Activated T-helper 1 cell treated with anti-CD3 and anti-CD28 coated beads, Interleukin-12 subunit alpha, Interleukin-12 subunit beta, Interleukin-2, Interleukin-4 antibody, amounts not matched to agents 30 ng/mL and 10 ng/mL and 1 ng/mL, durations not matched to agents 14 hours and 24 hours and 36 hours (primary cell): ENCODE measurements at regions of chr5 and their contacts with region 1.

Region 1: DNA sequence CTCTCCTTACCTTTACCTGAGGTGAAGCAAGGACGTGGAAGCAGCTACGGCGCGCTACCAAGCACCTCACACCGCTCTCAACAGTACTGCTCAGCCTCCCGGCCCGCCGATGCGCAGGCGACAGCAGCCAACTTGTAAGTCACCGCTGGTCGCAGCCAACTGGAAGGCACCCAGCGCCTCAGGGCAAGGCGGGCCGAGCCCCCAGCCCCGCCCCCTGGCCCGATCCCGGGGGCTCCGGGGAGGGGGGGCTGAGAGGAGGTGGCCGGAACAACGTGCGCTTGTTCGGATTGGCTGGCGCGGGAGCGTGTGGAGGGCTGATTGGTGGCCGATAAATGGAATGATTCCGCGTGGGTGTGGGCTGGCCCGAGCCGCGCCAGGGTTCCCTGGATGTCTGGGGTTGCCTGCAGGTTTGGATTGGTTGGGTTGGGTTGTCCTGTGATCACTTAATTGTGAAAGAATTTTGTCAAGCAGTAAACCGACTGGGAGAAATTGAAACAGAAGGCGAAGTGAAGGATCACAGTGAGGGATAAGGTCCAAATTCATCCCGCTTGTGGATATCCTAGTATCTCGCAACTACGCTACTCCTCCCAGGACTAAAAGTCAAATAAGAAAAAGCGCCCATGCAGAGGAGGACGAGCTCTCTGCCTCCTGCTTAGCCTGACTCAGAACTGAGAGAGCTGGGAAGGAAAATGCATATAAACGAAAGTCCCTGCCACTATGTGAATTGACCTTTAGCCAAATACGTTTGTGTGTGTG is at the start of gene STARD4:
- DNase-seq: peak; percentile 94
- H3K4me3 Mint-ChIP-seq: peak within 1 kb of the TSS; percentile 88
- H3K27ac Mint-ChIP-seq: peak within 1 kb of the TSS; percentile 99
- H3K4me1 Mint-ChIP-seq: peaks cover 61% of the 10 kb centered on the region
- H3K27me3 Mint-ChIP-seq: no peaks in the 10 kb centered on the region
- total RNA-seq, gene STARD4: 149 and 163 TPM in 2 replicates

Region 2: DNA sequence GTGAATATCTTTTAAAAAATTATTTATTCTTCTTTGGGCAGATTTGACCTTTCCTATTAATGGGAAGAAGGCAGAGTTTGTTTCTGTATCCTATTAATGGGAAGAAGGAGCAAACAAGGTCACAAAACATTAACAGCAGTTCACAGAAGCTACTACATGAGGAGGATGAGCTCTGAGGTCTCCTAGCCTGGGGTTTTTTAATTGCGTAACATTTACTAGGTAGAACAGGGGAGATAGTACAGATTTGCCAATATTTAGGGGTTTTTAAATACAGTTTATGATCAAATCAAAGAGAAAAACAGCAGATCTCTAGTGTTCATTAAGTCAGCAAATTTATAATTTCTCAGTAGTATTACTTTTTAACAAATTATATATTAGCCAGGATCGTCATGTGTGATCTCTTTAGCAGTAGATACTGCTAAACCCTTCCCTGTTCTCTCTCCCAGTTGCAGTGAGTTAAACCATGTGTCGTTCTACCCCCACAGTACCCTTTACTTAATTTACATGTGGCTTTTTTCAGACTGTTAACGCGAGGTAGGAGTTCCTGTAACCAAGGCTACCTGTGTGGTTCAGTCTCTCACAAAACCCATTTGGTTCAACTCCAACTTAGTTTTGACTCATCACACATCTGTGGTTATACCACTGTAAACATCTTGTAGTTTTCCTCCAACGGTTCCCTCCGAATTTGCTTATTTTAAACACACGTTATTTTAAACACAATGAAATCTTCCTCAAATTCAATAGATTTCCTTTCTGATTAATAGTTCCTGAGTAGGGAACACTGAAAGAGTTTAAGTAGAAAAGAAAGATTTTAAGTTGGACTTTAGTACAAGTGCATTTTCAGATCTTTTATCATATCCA is 760.4 kb before region 1 on chr5:
- intact Hi-C with region 1: loop called (anchors 1 kb)
- DNase-seq: peak; percentile 52
- H3K4me3 Mint-ChIP-seq: peak overlapping the region; percentile 64
- H3K27ac Mint-ChIP-seq: peak overlapping the region; percentile 92
- H3K4me1 Mint-ChIP-seq: peaks cover 60% of the 10 kb centered on the region
- H3K27me3 Mint-ChIP-seq: no peaks in the 10 kb centered on the region

Region 3: GRCh38 chr5:111223889-111224563 is 288.5 kb before region 1 on chr5 and contains the start of gene CAMK4:
- intact Hi-C with region 1: loop called (anchors 1 kb)
- DNase-seq: peak; percentile 70
- H3K4me3 Mint-ChIP-seq: peak within 1 kb of the TSS; percentile 98
- H3K27ac Mint-ChIP-seq: peak within 1 kb of the TSS; percentile 95
- H3K4me1 Mint-ChIP-seq: peaks cover 54% of the 10 kb centered on the region
- H3K27me3 Mint-ChIP-seq: peaks cover 2% of the 10 kb centered on the region
- total RNA-seq, gene CAMK4: 51.8 and 56.9 TPM in 2 replicates

Region 4: GRCh38 chr5:111337688-111338087 is 174.9 kb before region 1 on chr5:
- intact Hi-C with region 1: loop called (anchors 5 kb)
- DNase-seq: no peak
- H3K4me3 Mint-ChIP-seq: no peak overlapping the region
- H3K27ac Mint-ChIP-seq: peak overlapping the region; percentile 61
- H3K4me1 Mint-ChIP-seq: peaks cover 11% of the 10 kb centered on the region
- H3K27me3 Mint-ChIP-seq: no peaks in the 10 kb centered on the region

Region 5: DNA sequence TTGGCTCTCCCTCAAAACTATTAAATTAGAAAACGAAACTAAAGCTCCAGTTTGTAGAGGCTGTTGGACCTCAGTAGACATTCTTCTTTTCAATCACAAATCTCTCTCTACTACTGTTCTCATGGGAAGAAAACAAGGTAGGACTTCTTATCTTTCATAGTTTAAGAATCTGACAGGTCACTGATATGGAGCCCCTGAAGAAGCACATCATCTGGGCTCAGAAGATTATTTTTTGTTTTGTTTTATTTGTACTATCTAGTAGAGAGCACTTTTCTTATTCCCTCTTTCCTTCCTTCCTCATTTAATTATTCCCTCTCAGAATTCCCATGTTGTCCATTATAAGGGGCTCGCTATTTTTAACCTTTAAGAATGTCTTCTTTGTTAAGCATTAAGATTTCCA is 26.5 kb before region 1 on chr5:
- intact Hi-C with region 1: no loop called
- DNase-seq: no peak
- H3K4me3 Mint-ChIP-seq: no peak overlapping the region
- H3K27ac Mint-ChIP-seq: no peak overlapping the region
- H3K4me1 Mint-ChIP-seq: no peaks in the 10 kb centered on the region
- H3K27me3 Mint-ChIP-seq: no peaks in the 10 kb centered on the region

Region 6: DNA sequence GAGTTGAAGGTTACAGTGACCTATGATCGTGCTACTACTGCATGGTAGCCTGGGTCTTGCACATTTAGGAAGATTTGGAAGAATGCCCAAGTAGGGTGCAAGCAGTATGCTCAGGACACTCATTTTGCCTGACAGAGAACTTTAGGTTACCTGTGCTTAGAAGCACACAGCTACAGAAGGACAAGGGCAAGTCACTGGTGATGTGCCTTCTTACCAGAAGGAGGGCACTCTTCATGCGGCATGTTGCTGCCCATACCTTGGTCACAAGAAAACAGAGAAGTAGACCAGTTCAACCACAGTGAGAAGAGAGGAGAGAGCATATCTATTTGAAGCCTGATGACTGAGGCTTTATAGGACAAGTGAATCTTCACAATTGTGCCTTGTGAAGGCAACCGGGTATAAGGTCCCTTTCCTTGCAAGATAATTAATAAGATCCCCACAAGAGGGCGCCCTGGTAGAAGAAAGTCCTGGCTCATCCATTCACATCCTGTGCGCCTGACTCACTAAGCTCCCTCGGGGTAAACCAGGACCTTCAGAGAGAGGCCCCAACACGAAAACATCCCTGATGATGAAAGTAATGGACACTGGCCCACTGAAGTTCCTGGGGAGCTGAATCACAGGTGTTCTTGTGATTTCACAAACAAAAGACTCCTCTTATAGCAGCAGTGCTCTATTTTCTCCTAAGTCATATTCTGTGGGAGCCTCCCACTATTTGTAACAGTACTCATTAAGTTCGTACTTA is 37.9 kb after region 1 on chr5:
- intact Hi-C with region 1: loop called (anchors 1 kb)
- DNase-seq: peak; percentile 59
- H3K4me3 Mint-ChIP-seq: no peak overlapping the region
- H3K27ac Mint-ChIP-seq: peak overlapping the region; percentile 40
- H3K4me1 Mint-ChIP-seq: peaks cover 45% of the 10 kb centered on the region
- H3K27me3 Mint-ChIP-seq: peaks cover 3% of the 10 kb centered on the region

Region 7: GRCh38 chr5:112136773-112137172 is 624.2 kb after region 1 on chr5:
- intact Hi-C with region 1: no loop called
- DNase-seq: no peak
- H3K4me3 Mint-ChIP-seq: no peak overlapping the region
- H3K27ac Mint-ChIP-seq: no peak overlapping the region
- H3K4me1 Mint-ChIP-seq: no peaks in the 10 kb centered on the region
- H3K27me3 Mint-ChIP-seq: peaks cover 7% of the 10 kb centered on the region

Region 8: GRCh38 chr5:112160652-112161391 is 648.3 kb after region 1 on chr5:
- intact Hi-C with region 1: loop called (anchors 1 kb)
- DNase-seq: peak; percentile 89
- H3K4me3 Mint-ChIP-seq: peak overlapping the region; percentile 93
- H3K27ac Mint-ChIP-seq: peak overlapping the region; percentile 87
- H3K4me1 Mint-ChIP-seq: peaks cover 30% of the 10 kb centered on the region
- H3K27me3 Mint-ChIP-seq: peaks cover 3% of the 10 kb centered on the region